Dorsolateral prefrontal cortex (tissue), 120 donors: ENCODE measurements at regions of chr19 and their contacts with region 1.

Region 1: DNA sequence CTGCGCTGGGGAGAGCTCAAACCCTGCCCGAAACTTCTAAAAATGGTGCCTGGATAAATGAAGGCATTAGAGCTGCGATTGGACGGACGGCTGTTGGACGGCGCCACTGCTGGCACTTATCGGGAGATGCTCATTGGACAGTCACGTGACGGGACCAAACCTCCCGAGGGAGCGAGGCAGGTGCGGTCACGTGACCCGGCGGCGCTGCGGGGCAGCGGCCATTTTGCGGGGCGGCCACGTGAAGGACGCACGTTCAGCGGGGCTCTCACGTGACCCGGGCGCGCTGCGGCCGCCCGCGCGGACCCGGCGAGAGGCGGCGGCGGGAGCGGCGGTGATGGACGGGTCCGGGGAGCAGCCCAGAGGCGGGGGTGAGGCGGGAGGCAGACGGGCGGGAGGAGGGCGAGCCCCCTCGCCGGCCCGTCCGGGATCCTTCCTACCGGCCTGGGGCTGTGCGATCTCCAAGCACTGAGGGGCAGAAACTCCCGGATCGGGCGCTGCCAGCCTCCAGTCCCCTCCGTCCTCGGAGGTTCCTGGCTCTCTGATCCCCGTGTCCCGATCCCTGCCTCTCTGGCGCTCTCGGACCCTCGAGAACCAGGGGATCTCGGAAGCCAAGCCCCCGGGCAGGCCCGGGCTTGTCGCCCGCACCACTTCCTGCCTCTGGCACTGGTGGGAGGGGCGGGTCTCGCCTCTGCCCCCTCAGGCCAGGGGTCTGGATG is at the start of gene BAX:
- DNase-seq: peak; percentile 94 to 99 (median 96)
- H3K4me3 ChIP-seq: peak within 1 kb of the TSS; percentile 68 to 100 (median 97)
- H3K27ac ChIP-seq: peak within 1 kb of the TSS; percentile 74 to 98 (median 93)
- H3K27me3 ChIP-seq: no peaks in the 10 kb centered on the region
- CTCF ChIP-seq: peak in 43 of 56 donors; percentile 10 to 59 (median 36)
- total RNA-seq, gene BAX: 24.4 to 60.6 (median 39.2) TPM

Region 2: GRCh38 chr19:48899781-48900476 is 54.8 kb before region 1 on chr19 and contains the start of gene NUCB1:
- intact Hi-C with region 1: loop called (anchors 2 to 5 kb)
- DNase-seq: peak; percentile 97 to 99 (median 98)
- H3K4me3 ChIP-seq: peak within 1 kb of the TSS; percentile 56 to 99 (median 92)
- H3K27ac ChIP-seq: peak within 1 kb of the TSS; percentile 69 to 100 (median 94)
- H3K27me3 ChIP-seq: no peaks in the 10 kb centered on the region
- CTCF ChIP-seq: peak in 46 of 56 donors; percentile 5 to 60 (median 33)
- total RNA-seq, gene NUCB1: 123 to 249 (median 172) TPM

Region 3: DNA sequence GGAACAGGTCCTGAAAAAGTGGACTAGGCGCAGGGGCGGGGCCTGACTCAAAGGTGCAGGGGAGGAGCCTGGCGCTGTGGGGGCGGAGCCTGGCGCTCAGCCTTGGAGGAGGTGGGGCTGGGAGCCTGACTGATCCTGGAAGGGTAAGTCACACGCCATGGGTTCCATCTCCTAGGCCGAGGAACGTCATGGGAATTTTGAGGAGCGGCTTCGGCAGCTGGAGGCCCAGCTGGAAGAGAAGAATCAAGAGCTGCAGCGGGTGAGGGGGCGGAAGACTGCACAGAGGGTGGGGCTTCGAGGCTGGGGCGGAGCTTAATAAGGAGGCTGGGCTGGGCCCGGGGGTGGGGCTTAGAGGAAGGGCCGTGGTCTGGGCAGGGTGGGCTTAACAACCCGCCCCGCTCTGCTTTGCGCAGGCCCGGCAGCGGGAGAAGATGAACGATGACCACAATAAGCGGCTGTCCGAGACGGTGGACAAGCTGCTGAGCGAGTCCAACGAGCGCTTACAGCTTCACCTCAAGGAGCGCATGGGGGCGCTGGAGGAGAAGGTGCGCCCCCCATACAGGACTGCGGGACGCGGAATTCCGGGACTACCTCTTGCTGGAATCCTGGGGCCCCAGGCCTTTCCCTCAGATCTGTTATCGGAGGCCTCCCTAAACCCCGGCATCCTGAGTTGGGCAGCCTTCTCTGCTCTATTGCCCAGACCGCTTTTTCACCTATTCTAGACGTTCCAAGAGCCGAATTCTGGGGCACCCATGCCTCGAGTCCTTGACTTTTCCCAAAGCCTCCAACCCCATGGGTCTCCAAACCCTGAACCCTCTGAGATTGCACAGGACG is 179.1 kb after region 1 on chr19:
- intact Hi-C with region 1: no loop called
- DNase-seq: no peak
- H3K4me3 ChIP-seq: peak overlapping the region in 24 of 59 donors; percentile 1 to 46 (median 16)
- H3K27ac ChIP-seq: peak overlapping the region in 1 of 59 donors; percentile 11
- H3K27me3 ChIP-seq: no peaks in the 10 kb centered on the region
- CTCF ChIP-seq: no peak